ENCODE measurements at regions of chr11 and their contacts with region 1.

Region 1: DNA sequence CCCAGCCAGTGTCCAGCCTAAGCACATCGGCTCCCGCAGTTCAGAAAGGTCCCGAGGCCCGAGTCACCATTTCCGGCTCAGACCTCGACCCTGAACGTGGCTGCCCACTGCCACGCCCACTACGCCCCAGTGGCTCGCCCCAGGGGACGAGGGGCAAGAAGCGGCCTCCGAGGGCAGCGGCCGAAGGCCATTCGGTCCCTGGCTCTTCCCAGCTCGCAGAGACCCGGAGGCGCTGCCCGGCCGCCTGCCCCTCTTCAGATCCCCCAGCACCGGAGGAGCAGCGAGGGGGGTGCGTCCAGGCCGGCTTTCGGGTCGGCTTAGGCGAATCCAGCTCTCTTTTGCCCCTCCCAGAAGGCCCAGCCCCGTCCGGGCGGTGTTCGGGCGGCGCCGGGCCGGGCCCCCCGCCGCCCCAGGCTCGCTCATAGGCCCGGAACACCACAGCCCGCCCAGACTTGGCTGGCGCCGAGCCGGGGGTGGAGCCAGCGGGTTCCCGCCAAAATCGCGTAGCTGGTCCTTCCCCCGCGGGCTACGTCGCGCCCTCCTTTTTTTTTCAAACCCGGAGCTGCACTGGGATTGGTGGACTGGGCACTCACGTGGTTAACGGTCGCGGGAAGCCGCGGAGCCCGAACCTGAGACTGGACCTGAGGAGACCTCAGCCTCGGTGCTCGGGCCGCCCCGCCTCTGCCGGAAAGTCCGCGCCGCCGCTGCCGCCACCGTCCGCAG is at the start of gene WEE1:
- DNase-seq: peak; percentile 99
- ATAC-seq: peak; percentile 90
- H3K4me3 Mint-ChIP-seq: peak within 1 kb of the TSS; percentile 95
- H3K27ac Mint-ChIP-seq: peak within 1 kb of the TSS; percentile 95
- H3K4me1 Mint-ChIP-seq: peaks cover 64% of the 10 kb centered on the region
- H3K27me3 Mint-ChIP-seq: no peaks in the 10 kb centered on the region
- CTCF ChIP-seq: no peak
- total RNA-seq, gene WEE1: 85.5 to 109 TPM (median 91.3 TPM) in 3 replicates

Region 2: DNA sequence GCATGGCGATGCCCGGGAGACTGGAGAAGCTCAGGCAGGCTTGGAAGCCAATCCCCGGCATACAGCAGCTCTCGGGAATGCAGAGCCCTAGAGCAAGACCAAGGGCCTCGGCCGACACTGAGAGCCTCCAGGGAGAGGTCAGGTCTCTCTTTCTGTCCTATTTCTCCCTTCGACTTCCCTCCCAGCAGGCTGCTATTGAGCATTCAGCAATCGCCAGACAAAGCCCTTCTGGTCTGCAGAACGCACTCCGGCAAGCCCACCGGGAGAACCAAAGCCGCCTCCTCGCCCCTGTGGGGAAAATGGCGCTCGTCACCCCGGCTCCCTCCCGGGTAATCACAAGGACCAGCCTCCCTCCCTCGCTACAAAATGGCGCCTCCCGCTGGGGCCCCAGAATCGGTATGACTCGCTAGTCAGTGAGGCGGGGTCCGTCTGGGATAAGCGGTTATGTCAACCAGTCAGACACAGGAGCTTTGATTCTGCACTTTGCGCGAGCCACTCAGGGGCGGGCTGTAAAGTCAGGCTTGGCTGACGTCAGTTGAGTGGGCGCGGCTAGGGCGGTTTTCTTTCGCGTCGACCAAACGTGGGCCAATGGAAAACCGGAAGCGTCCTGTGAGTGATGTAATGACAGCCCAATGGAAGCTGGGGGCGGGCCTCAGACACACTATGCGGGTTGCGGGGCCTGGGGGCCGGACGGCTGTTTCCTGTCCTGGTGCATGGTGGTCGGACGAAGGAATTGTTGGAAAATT is 112.7 kb before region 1 on chr11 and contains the start of gene ZNF143:
- CTCF ChIA-PET with region 1: no interaction called
- POLR2A ChIA-PET with region 1: interaction called, 27 read pairs
- DNase-seq: peak; percentile 100
- ATAC-seq: peak; percentile 96
- H3K4me3 Mint-ChIP-seq: peak within 1 kb of the TSS; percentile 98
- H3K27ac Mint-ChIP-seq: peak within 1 kb of the TSS; percentile 99
- H3K4me1 Mint-ChIP-seq: peaks cover 18% of the 10 kb centered on the region
- H3K27me3 Mint-ChIP-seq: no peaks in the 10 kb centered on the region
- CTCF ChIP-seq: no peak
- total RNA-seq, gene ZNF143: 34.0 to 35.8 TPM (median 34.0 TPM) in 3 replicates

Region 3: DNA sequence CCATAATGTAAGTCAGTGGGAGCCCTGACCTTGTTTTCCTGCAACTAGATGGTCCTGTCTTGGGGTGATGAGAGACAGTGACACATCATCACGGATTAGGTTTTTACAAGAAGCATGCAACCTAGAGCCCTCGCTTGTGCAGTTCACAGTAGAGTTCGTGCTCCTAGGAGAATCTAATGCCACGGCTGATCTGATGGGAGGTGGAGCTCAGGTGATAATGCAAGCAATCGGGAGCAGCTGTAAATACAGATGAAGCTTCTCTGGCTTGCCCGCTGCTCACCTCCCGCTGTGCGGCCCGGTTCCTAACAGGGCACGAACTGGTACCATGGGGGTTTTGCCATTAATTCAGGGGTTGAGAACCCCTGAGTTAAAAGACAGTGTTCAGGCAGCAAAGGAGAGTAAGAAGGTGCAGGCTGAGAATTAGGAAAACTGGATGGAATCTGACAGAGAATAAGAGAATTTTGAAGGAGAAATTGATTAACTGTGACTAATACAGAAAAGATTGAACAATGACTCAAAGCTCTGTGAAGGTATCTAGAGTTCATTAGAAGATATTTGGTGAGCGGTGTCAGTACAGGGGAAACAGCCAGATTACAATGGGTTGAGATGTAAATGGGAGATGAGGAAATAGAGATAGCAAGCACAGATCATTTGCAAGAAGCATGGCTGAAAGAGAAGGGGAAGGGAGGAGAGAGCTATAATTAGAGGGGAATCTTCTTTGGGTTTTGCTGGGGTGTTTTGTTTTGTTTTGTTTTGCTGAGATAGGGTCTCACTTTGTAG is 21.2 kb after region 1 on chr11:
- CTCF ChIA-PET with region 1: no interaction called
- POLR2A ChIA-PET with region 1: interaction called, 10 read pairs
- DNase-seq: peak; percentile 26
- ATAC-seq: no peak
- H3K4me3 Mint-ChIP-seq: no peak overlapping the region
- H3K27ac Mint-ChIP-seq: peak overlapping the region; percentile 23
- H3K4me1 Mint-ChIP-seq: peaks cover 19% of the 10 kb centered on the region
- H3K27me3 Mint-ChIP-seq: no peaks in the 10 kb centered on the region
- CTCF ChIP-seq: no peak

Region 4: DNA sequence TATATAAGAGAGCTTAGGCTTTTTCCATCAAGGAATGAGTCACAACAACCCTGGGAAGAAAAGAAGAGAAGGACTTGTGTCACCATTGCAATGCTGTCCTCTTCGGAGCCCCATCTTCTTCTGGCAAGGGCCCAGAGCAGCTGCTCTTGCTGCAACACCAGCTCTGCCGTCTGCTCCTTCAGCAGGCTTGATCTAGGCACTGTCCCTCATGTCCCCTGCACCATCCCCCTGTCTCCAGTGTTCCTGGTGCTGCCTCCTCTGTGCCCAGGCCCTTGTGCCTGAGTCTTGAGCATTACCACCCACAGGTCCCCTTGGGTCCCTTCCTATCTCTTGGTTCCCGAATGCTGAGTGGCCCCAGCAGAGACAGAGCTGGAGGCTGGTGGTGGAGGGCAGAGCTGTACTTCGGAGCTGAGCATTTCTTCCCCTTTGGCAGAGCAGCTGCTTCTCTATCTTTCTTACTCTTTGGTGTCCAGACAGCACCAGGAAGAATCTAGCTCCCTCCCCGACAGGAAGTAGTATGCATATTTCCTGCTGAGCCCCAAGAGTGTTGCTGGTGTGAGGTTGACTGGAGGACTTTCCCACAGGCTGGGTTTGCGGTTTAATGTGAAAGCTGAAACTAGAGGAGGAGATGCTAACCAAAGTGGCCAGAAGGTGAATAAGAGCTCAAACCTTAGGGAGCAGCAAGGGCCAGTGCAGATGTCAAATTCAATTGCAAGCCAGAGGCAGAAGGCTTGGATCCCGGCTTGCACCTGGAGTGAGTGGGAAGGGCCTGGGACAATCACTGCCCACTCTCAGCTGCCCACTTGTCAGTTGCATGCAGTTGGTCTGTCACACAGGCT is 28.0 kb after region 1 on chr11:
- CTCF ChIA-PET with region 1: interaction called, 3 read pairs
- POLR2A ChIA-PET with region 1: interaction called, 11 read pairs
- DNase-seq: peak; percentile 36
- ATAC-seq: peak; percentile 91
- H3K4me3 Mint-ChIP-seq: 0 out of 2 replicates have a peak overlapping the region, but pooled peaks have one; percentile 3
- H3K27ac Mint-ChIP-seq: peak overlapping the region; percentile 90
- H3K4me1 Mint-ChIP-seq: peaks cover 24% of the 10 kb centered on the region
- H3K27me3 Mint-ChIP-seq: no peaks in the 10 kb centered on the region
- CTCF ChIP-seq: no peak

Region 5: DNA sequence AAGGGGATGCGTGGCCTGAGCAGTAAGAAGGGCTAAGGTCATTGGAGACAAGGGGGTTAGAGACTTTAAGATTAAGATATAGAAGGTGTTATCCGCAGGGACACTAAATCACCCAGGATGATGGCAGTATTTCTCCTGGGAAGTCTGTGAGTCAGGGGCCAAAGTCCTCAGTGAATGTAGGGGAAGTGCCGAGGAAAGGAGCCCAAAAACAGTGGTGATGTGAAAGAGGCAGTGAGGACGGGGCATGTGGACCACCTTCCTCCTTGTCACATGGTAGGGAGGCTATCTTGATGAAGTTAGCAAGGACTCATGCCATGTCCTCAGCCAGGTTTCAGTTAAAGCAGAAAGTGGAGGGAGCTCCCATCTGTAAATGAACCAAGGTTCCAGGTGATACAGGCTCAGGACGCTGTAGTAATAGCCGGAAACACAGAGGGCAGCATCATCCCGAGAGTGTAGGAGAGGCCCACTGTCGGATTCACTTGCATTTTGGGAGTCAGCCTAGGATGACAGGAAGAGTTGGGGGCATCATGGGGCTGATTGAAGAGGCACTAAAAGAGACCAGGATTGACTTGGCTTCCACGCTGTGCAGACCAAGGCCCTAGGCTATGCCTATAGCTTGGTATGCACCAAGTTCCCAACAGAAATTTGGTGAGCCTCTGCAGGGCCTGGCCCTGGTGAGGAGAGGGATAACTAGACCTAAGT is 33.7 kb after region 1 on chr11:
- CTCF ChIA-PET with region 1: interaction called, 3 read pairs
- POLR2A ChIA-PET with region 1: interaction called, 15 read pairs
- DNase-seq: peak; percentile 53
- ATAC-seq: peak; percentile 92
- H3K4me3 Mint-ChIP-seq: no peak overlapping the region
- H3K27ac Mint-ChIP-seq: 0 out of 2 replicates have a peak overlapping the region, but pooled peaks have one; percentile 6
- H3K4me1 Mint-ChIP-seq: peaks cover 32% of the 10 kb centered on the region
- H3K27me3 Mint-ChIP-seq: no peaks in the 10 kb centered on the region
- CTCF ChIP-seq: no peak

Measured in WTC11 (cell line).